Right ventricle myocardium superior (tissue), 1 donor: ENCODE measurements at regions of chr3 and their contacts with region 1.

Region 1: DNA sequence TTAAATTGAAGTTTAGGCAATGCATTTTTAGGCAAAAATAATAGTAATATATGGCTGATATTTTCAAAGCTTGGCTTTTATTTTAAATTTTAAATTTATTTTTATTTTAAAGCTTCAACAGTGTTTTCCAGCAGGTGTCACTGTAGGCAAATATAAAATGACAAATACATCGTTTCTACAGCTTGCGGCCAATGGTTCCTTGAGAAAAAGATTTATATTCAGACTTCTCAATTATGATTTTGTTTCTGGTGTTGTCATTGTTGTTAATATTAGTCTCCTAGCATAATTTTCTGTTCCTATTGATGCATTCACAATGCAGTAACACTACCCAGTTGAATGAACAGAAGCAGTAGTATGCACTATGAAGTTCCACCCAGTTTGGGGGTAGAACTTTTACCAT is 220.7 kb upstream of the DNAJC19 start:
- DNase-seq: no peak
- ATAC-seq: no peak

Region 2: DNA sequence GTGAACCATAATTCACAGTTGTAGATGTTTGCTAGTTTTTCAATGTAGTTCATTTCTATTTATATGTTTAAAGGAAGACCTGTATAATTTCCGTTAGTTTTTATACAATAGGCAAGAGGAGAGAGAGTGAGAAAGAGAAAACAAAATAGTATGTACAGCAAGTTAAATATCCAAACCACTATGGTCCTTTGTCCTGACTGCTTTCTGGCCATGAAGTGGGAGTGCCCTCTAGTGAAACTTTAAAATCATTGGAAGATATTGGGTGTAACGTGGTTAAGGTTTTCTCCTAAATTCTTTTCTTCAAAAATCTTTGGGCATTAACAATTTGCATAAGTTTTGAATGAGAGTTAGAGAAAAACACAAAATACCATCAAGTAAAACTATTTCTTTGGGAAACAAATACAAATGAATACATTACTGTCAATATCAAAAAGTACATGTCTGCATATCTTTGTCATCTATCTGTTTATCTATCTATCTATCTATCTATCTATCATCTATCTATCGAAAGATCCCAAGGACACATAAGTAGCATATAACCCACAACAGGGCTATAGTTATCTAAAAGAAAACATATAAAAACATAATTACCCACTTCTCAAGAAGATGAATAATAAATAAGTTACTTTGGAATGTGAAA is 1048.4 kb after region 1 on chr3:
- intact Hi-C with region 1: loop called (anchors 10 kb)
- DNase-seq: no peak
- ATAC-seq: peak; percentile 56